Activated CD4-positive, alpha-beta T cell treated with anti-CD3 and anti-CD28 coated beads, Interleukin-2, amount 10 ng/mL, durations not matched to agents 24 days and 14 days (primary cell): ENCODE measurements at regions of chr14 and their contacts with region 1.

Region 1: GRCh38 chr14:49420201-49420600 is 166.0 kb downstream of the RPS29 start:
- DNase-seq: no peak
- H3K4me3 Mint-ChIP-seq: no peak overlapping the region
- H3K27ac Mint-ChIP-seq: peak overlapping the region; percentile 47
- H3K4me1 Mint-ChIP-seq: no peaks in the 10 kb centered on the region
- H3K27me3 Mint-ChIP-seq: peaks cover 4% of the 10 kb centered on the region

Region 2: GRCh38 chr14:49405291-49405690 is 14.9 kb before region 1 on chr14:
- intact Hi-C with region 1: loop called (anchors 1 kb)
- DNase-seq: no peak
- H3K4me3 Mint-ChIP-seq: no peak overlapping the region
- H3K27ac Mint-ChIP-seq: peak overlapping the region; percentile 13
- H3K4me1 Mint-ChIP-seq: no peaks in the 10 kb centered on the region
- H3K27me3 Mint-ChIP-seq: peaks cover 2% of the 10 kb centered on the region